ENCODE measurements at regions of chr12 and their contacts with region 1.

Region 1: DNA sequence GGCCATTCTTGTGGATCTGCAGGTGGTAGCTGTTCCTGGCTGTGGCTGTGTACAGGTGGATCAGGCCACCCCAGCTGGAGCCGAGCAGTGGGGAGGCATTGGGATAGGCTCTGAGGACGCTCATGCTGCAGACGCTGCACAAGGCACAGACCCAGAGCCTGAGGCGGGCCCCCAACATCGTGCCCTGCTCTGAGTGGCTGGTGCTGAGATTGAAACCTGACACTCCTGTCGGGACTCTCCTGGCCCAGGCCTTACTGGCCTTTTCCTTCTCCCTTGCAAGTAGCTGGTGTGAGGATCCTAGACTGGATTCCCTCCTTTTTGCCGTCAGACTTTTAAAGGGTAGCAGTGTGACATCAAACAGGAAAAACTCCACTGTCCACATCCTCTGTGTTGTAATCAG is at the start of gene FGF23:
- DNase-seq: no peak
- H3K4me3 ChIP-seq: no peak within 1 kb of the TSS
- H3K27ac ChIP-seq: no peak within 1 kb of the TSS
- H3K4me1 ChIP-seq: peaks cover 0 to 3% of the 10 kb centered on the region in 2 experiments; a peak in 1 of 4 replicates
- H3K27me3 ChIP-seq: peaks cover 12% of the 10 kb centered on the region; the same call in 1 of the 2 replicates
- CTCF ChIP-seq: no peak
- EP300 ChIP-seq: no peak
- RAD21 ChIP-seq: no peak
- polyA plus RNA-seq, gene FGF23: not detected in 2 replicates

Region 2: GRCh38 chr12:4402996-4403395 is 23.6 kb after region 1 on chr12:
- CTCF ChIA-PET with region 1: interaction called, 10 read pairs
- POLR2A ChIA-PET with region 1: no interaction called
- DNase-seq: no peak
- H3K4me3 ChIP-seq: no peak overlapping the region
- H3K27ac ChIP-seq: no peak overlapping the region
- H3K4me1 ChIP-seq: no peaks in the 10 kb centered on the region
- H3K27me3 ChIP-seq: peaks cover 9% of the 10 kb centered on the region
- CTCF ChIP-seq: no peak
- EP300 ChIP-seq: no peak
- RAD21 ChIP-seq: no peak

Region 3: GRCh38 chr12:4412465-4412864 is 33.1 kb after region 1 on chr12:
- CTCF ChIA-PET with region 1: interaction called, 13 read pairs
- POLR2A ChIA-PET with region 1: interaction called, 3 read pairs
- DNase-seq: peak; percentile 56
- H3K4me3 ChIP-seq: no peak overlapping the region
- H3K27ac ChIP-seq: peak overlapping the region in 1 of 2 experiments; percentile 73; a peak in 2 of 4 replicates
- H3K4me1 ChIP-seq: peaks cover 0 to 29% of the 10 kb centered on the region in 2 experiments; a peak in 2 of 4 replicates
- H3K27me3 ChIP-seq: peaks cover 40% of the 10 kb centered on the region; the same call in 1 of the 2 replicates
- CTCF ChIP-seq: no peak
- EP300 ChIP-seq: no peak
- RAD21 ChIP-seq: no peak

Region 4: DNA sequence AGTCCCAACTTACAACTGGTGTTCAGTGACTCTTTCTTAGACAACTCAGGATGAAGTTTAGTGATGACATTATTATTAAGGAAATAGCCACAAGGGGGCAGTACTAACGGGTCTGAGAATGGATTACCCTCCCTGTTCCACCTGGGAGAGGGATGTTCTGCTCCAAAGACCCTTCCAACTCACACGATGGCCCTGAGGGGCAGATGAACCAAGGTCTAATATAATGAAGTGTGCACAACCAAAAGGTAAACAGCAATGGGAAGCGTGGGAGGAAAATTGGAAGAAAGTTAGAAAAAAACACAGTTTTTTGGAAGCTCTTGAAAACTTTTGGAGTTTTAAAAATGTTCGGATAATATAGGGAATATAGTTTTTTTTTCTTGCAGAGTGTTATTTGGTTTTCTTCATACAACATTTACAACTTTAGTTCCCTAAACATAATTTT is 42.2 kb after region 1 on chr12:
- CTCF ChIA-PET with region 1: interaction called, 28 read pairs
- POLR2A ChIA-PET with region 1: no interaction called
- DNase-seq: peak; percentile 82
- H3K4me3 ChIP-seq: no peak overlapping the region; a peak in 1 of 4 replicates
- H3K27ac ChIP-seq: no peak overlapping the region
- H3K4me1 ChIP-seq: peaks cover 0 to 15% of the 10 kb centered on the region in 2 experiments; a peak in 1 of 4 replicates
- H3K27me3 ChIP-seq: peaks cover 23% of the 10 kb centered on the region; the same call in 1 of the 2 replicates
- CTCF ChIP-seq: peak; percentile 77
- EP300 ChIP-seq: no peak
- RAD21 ChIP-seq: peak; percentile 57

Region 5: GRCh38 chr12:4526923-4527546 is 147.6 kb after region 1 on chr12:
- CTCF ChIA-PET with region 1: interaction called, 55 read pairs
- POLR2A ChIA-PET with region 1: no interaction called
- DNase-seq: peak; percentile 7
- H3K4me3 ChIP-seq: no peak overlapping the region
- H3K27ac ChIP-seq: no peak overlapping the region
- H3K4me1 ChIP-seq: no peaks in the 10 kb centered on the region
- H3K27me3 ChIP-seq: no peaks in the 10 kb centered on the region
- CTCF ChIP-seq: peak; percentile 66
- EP300 ChIP-seq: no peak
- RAD21 ChIP-seq: peak; percentile 42